ENCODE measurements at regions of chr2 and their contacts with region 1.

Region 1: GRCh38 chr2:82412021-82412420 is 2047.1 kb downstream of the SUCLG1 start:
- DNase-seq: no peak
- ATAC-seq: no peak
- H3K4me3 ChIP-seq: no peak overlapping the region
- H3K27ac ChIP-seq: no peak overlapping the region
- H3K4me1 ChIP-seq: no peaks in the 10 kb centered on the region
- H3K27me3 ChIP-seq: peaks cover 0 to 1% of the 10 kb centered on the region in 2 donors

Region 2: GRCh38 chr2:82391386-82391785 is 20.6 kb before region 1 on chr2:
- intact Hi-C with region 1: loop called in 1 of 2 experiments (anchors 2 kb)
- DNase-seq: no peak
- ATAC-seq: no peak
- H3K4me3 ChIP-seq: no peak overlapping the region
- H3K27ac ChIP-seq: no peak overlapping the region
- H3K4me1 ChIP-seq: no peaks in the 10 kb centered on the region
- H3K27me3 ChIP-seq: no peaks in the 10 kb centered on the region

Region 3: GRCh38 chr2:83305758-83306378 is 893.8 kb after region 1 on chr2:
- intact Hi-C with region 1: no loop called
- DNase-seq: peak in 1 of 2 donors; percentile 54
- ATAC-seq: no peak
- H3K4me3 ChIP-seq: no peak overlapping the region
- H3K27ac ChIP-seq: no peak overlapping the region
- H3K4me1 ChIP-seq: no peaks in the 10 kb centered on the region
- H3K27me3 ChIP-seq: no peaks in the 10 kb centered on the region

Measured in aorta (tissue), 5 donors.